BJ (cell line): ENCODE measurements at regions of chr9 and their contacts with region 1.

Region 1: DNA sequence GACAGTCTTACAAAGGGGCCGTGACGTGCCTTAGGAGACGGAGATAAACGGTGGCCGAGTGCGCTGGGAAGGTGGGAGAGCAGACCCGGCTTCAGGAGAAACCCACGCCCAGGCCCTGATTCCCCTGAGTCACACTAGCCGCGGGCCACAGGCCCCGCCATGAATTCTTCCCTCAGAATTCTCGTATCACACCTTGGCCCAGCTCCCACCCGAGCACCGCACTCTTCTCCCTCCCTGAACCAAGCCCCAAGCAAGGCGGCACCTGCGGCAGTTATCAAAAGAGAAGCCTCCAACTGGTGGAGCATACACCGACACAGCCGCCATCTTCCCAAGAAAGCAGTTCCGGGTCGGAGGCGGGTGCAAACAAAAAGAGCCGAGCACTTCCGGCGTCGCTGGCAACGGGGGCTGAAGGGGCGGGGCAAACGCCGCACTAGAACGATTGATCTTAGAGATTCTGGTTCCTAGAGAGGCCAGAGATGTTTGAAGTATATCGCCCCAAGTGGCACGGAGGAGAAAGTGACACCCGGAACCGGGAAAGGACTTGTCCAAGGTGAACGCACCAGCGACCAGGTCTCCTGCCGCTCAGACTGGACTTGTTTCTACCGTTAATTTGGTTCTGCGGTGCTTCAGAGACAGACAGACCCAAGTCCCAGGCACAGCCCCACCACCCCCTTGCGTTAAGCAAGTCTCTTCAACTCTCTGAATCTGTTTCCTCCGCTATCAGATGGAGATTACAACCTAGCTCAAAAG is at the start of gene PSMB7:
- DNase-seq: peak; percentile 66
- H3K4me3 ChIP-seq: peak within 1 kb of the TSS; percentile 77
- H3K27me3 ChIP-seq: no peaks in the 10 kb centered on the region
- CTCF ChIP-seq: peak; percentile 81
- polyA plus RNA-seq, gene PSMB7: 325 and 357 TPM in 2 replicates

Region 2: GRCh38 chr9:124392871-124393460 is 22.3 kb before region 1 on chr9:
- CTCF ChIA-PET with region 1: interaction called, 26 read pairs
- POLR2A ChIA-PET with region 1: no interaction called
- DNase-seq: peak; percentile 66
- H3K4me3 ChIP-seq: no peak overlapping the region
- H3K27me3 ChIP-seq: no peaks in the 10 kb centered on the region
- CTCF ChIP-seq: peak; percentile 65

Region 3: GRCh38 chr9:124399323-124399967 is 15.8 kb before region 1 on chr9:
- CTCF ChIA-PET with region 1: interaction called, 26 read pairs
- POLR2A ChIA-PET with region 1: no interaction called
- DNase-seq: peak; percentile 50
- H3K4me3 ChIP-seq: no peak overlapping the region
- H3K27me3 ChIP-seq: no peaks in the 10 kb centered on the region
- CTCF ChIP-seq: peak; percentile 53

Region 4: GRCh38 chr9:124428751-124429529 is 13.7 kb after region 1 on chr9:
- CTCF ChIA-PET with region 1: interaction called, 14 read pairs
- POLR2A ChIA-PET with region 1: no interaction called
- DNase-seq: no peak
- H3K4me3 ChIP-seq: no peak overlapping the region
- H3K27me3 ChIP-seq: peaks cover 10% of the 10 kb centered on the region
- CTCF ChIP-seq: no peak

Region 5: GRCh38 chr9:124532897-124533296 is 117.6 kb after region 1 on chr9:
- CTCF ChIA-PET with region 1: interaction called, 130 read pairs
- POLR2A ChIA-PET with region 1: no interaction called
- DNase-seq: no peak
- H3K4me3 ChIP-seq: no peak overlapping the region
- H3K27me3 ChIP-seq: no peaks in the 10 kb centered on the region
- CTCF ChIP-seq: no peak